ENCODE measurements at regions of chr4 and their contacts with region 1.

Region 1: GRCh38 chr4:7761720-7762119 is 177.9 kb downstream of the AFAP1 start:
- DNase-seq: peak; percentile 87
- CTCF ChIP-seq: peak; percentile 88

Region 2: GRCh38 chr4:7781366-7781765 is 19.6 kb after region 1 on chr4:
- CTCF ChIA-PET with region 1: interaction called, 17 read pairs
- POLR2A ChIA-PET with region 1: no interaction called
- DNase-seq: no peak
- CTCF ChIP-seq: no peak

Region 3: GRCh38 chr4:7792616-7793015 is 30.9 kb after region 1 on chr4:
- CTCF ChIA-PET with region 1: interaction called, 25 read pairs
- POLR2A ChIA-PET with region 1: no interaction called
- DNase-seq: peak; percentile 45
- CTCF ChIP-seq: no peak

Region 4: GRCh38 chr4:7811536-7812191 is 49.9 kb after region 1 on chr4:
- CTCF ChIA-PET with region 1: interaction called, 547 read pairs
- POLR2A ChIA-PET with region 1: no interaction called
- DNase-seq: no peak
- CTCF ChIP-seq: no peak

Region 5: GRCh38 chr4:7987148-7987989 is 225.6 kb after region 1 on chr4:
- CTCF ChIA-PET with region 1: interaction called, 16 read pairs
- POLR2A ChIA-PET with region 1: no interaction called
- DNase-seq: peak; percentile 77
- CTCF ChIP-seq: peak; percentile 82